A549 (cell line): ENCODE measurements at regions of chr6 and their contacts with region 1.

Region 1: GRCh38 chr6:90393232-90393884 is 96.7 kb upstream of the BACH2 start:
- DNase-seq: peak; percentile 12 to 38
- ATAC-seq: peak; percentile 80 to 82; a peak in 3 of 6 replicates
- H3K4me3 ChIP-seq: no peak overlapping the region
- H3K27ac ChIP-seq: no peak overlapping the region
- H3K4me1 ChIP-seq: no peaks in the 10 kb centered on the region
- CTCF ChIP-seq: peak; percentile 66
- EP300 ChIP-seq: no peak
- POLR2A ChIP-seq: no peak
- RAD21 ChIP-seq: peak; percentile 74 to 77

Region 2: DNA sequence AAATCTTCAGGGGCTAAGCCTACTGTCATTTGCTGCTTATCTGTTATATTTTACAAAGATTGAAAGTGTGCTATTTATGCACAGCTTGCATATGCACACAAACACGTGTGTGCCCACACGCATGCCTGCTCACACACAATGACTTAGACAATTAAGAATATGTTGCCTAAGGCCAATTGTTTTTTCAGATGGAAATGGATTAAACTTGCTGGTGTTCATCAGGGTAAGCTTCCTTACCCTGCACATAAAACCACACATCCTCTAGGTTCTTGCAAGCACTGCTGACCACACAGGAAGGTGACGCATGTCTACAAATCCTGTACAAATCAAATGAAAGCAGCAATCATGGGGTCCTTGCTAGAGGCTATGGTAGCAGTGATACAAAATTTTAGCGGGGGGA is 440.7 kb before region 1 on chr6:
- CTCF ChIA-PET with region 1: no interaction called
- POLR2A ChIA-PET with region 1: no interaction called
- DNase-seq: no peak
- ATAC-seq: no peak
- H3K4me3 ChIP-seq: no peak overlapping the region
- H3K27ac ChIP-seq: no peak overlapping the region
- H3K4me1 ChIP-seq: no peaks in the 10 kb centered on the region
- CTCF ChIP-seq: no peak
- EP300 ChIP-seq: no peak
- POLR2A ChIP-seq: no peak
- RAD21 ChIP-seq: no peak

Region 3: GRCh38 chr6:90350689-90351554 is 42.4 kb before region 1 on chr6:
- CTCF ChIA-PET with region 1: no interaction called
- POLR2A ChIA-PET with region 1: no interaction called
- DNase-seq: no peak
- ATAC-seq: no peak
- H3K4me3 ChIP-seq: no peak overlapping the region
- H3K27ac ChIP-seq: no peak overlapping the region
- H3K4me1 ChIP-seq: no peaks in the 10 kb centered on the region
- CTCF ChIP-seq: no peak
- EP300 ChIP-seq: no peak
- POLR2A ChIP-seq: no peak
- RAD21 ChIP-seq: no peak

Region 4: DNA sequence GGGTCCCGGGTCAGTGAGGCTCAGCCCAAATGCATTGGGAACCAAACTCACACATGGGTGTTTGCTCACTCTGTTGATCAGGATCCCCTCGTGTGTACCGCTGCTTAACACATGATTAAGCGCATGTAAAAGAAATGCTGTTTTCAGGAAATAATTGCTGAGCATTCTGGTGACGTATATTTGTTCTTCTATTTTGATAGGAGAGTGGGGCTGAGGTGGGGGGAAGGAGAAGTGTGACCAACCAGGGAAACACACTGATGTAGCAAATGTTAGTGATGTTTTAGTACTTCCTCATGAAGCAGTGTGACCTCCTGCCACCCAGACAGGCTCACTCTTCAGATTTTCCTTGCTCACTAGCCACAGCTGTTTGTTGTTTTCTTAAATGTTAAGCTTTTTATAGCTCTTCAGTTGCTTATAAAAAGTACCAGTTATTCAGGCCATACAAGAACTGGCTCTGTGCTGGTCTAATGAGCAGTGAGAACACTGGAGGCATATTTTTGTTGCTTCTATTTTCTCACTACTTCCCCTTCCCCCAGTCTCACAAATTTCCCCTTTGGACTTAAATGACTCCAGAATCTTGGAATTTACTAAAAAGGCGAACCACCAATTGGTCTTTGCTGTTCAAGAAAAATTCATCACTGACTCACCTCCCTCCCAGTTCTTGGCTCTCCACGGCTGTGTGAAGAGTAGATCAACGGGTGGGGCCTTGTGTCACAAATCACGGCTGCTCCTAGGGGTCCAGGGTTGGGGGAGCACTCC is 17.5 kb before region 1 on chr6:
- CTCF ChIA-PET with region 1: interaction called, 15 read pairs
- POLR2A ChIA-PET with region 1: no interaction called
- DNase-seq: no peak
- ATAC-seq: no peak
- H3K4me3 ChIP-seq: no peak overlapping the region
- H3K27ac ChIP-seq: no peak overlapping the region
- H3K4me1 ChIP-seq: no peaks in the 10 kb centered on the region
- CTCF ChIP-seq: no peak
- EP300 ChIP-seq: no peak
- POLR2A ChIP-seq: no peak
- RAD21 ChIP-seq: no peak

Region 5: DNA sequence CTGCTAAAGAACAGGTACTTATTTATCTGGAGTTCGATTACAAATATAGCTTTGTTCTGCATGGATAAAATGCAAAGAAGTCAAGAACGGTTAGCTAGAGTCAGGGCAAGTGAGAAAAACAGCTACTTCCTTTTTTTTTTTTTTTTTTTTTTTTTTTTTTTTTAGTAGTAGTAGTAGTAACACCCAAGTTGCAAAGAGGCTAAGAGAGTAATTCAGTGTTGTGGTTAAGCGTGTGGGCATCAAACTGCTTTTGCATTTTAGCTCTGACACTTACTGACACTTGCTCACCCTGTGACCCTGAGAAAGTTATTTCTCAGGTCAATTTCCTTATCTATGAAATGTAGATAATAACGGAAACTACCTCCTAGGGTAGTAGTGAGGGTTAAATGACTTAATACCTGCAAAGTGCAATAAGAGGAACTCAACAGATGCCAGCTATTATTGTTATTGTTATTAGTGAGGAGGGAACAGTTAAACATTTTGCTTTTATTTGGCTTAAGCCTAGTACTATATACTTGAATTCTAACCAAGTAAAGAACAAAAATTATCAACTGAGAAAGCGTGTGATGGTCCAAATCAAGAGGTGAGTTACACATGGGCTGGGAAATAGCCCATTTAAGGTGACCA is 10.0 kb before region 1 on chr6:
- CTCF ChIA-PET with region 1: interaction called, 15 read pairs
- POLR2A ChIA-PET with region 1: no interaction called
- DNase-seq: no peak
- ATAC-seq: no peak
- H3K4me3 ChIP-seq: no peak overlapping the region
- H3K27ac ChIP-seq: no peak overlapping the region
- H3K4me1 ChIP-seq: no peaks in the 10 kb centered on the region
- CTCF ChIP-seq: no peak
- EP300 ChIP-seq: no peak
- POLR2A ChIP-seq: no peak
- RAD21 ChIP-seq: no peak